Naive thymus-derived CD4-positive, alpha-beta T cell (primary cell): ENCODE measurements at regions of chr3 and their contacts with region 1.

Region 1: DNA sequence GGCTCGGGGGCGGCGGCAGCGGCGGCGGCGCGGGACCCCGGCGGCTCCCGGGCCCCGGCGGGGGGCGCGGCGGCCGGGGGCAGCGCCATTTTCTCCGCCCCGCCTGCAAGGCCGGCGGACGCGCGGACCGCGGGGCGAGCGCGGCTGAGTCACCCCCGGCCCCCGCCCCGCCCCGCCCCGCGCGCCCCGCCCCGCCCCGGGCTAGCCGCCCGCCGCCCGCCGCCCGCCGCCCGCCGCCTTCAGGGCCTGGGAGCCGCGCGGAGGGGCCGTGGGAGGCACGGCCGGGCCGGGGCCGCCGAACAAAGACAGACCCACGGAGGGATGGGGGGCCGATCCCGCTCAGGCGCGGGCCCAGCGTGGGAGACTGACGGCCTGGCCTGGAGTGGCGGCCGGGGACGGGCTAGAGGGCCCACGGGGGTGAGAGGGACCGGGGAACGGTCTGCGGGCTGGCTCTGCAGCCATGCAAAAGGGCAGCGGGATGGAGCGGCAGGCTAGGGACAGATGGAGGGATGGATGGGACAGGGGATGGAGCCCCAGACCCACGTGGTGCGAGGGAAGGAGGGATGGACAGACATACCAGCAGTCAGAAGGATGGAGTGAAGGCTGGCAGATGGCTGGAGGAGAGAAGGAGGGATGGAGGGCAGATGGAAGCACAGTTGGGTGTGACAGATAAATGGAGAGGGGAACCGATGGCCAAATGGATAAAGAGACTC is at the start of gene EIF4E3:
- DNase-seq: peak in 5 of 9 donors; percentile 14 to 72 (median 33)
- ATAC-seq: peak; percentile 61
- H3K4me3 ChIP-seq: peak within 1 kb of the TSS; percentile 81
- H3K4me3 Mint-ChIP-seq: peak within 1 kb of the TSS; percentile 85 to 99 (median 95)
- H3K27ac ChIP-seq: peak within 1 kb of the TSS; percentile 76
- H3K27ac Mint-ChIP-seq: peak within 1 kb of the TSS; percentile 84 to 98 (median 96)
- H3K4me1 ChIP-seq: peaks cover 51 to 60% of the 10 kb centered on the region in 2 donors
- H3K4me1 Mint-ChIP-seq: peaks cover 60 to 81% (median 76%) of the 10 kb centered on the region in 7 donors
- H3K27me3 ChIP-seq: no peaks in the 10 kb centered on the region
- H3K27me3 Mint-ChIP-seq: no peaks in the 10 kb centered on the region
- total RNA-seq, gene EIF4E3: 28.5 to 72.8 (median 39.2) TPM

Region 2: DNA sequence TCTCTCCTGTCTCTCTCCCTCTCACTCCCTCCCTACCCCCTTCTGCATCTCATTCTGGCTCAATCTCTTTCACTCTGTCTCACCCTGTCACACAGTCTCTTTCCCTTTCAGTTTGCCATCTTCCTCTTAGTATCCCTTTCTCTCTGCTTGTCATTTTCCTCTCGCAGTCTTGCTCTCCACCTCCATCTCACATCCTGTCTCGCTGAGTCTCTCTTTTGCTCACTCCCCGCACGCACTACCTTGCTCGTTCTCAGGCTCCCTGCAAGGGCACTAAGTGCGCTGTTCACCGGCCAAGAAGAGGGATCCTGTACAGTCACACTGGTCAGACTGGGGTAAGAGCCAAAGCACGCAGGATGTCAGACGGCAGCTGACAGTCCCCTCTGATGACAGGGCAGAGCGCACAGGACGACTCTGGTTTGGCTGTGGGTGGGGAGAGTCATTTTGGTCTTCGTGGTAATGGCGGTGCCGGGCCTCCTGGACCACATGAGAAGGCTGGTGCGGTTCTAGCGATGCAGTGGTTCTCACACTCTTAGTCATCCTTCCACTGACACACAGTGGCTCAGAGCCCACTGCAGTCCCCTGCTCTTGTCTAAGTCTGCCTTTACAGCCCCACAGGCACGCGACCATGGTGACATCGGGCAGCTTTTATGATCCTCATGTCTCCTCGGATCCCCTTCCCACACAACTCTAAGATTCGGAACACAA is 498.7 kb before region 1 on chr3:
- CTCF ChIA-PET with region 1: no interaction called
- POLR2A ChIA-PET with region 1: no interaction called
- intact Hi-C with region 1: loop called in 1 of 2 experiments (anchors 5 kb)
- DNase-seq: peak; percentile 34 to 89 (median 65)
- ATAC-seq: peak; percentile 86
- H3K4me3 ChIP-seq: peak overlapping the region; percentile 48
- H3K4me3 Mint-ChIP-seq: peak overlapping the region; percentile 51 to 85 (median 79)
- H3K27ac ChIP-seq: peak overlapping the region; percentile 59
- H3K27ac Mint-ChIP-seq: peak overlapping the region; percentile 85 to 97 (median 90)
- H3K4me1 ChIP-seq: peaks cover 21 to 64% of the 10 kb centered on the region in 2 donors
- H3K4me1 Mint-ChIP-seq: peaks cover 30 to 91% (median 88%) of the 10 kb centered on the region in 7 donors
- H3K27me3 ChIP-seq: no peaks in the 10 kb centered on the region
- H3K27me3 Mint-ChIP-seq: peaks cover 0 to 52% (median 0%) of the 10 kb centered on the region in 5 donors

Region 3: DNA sequence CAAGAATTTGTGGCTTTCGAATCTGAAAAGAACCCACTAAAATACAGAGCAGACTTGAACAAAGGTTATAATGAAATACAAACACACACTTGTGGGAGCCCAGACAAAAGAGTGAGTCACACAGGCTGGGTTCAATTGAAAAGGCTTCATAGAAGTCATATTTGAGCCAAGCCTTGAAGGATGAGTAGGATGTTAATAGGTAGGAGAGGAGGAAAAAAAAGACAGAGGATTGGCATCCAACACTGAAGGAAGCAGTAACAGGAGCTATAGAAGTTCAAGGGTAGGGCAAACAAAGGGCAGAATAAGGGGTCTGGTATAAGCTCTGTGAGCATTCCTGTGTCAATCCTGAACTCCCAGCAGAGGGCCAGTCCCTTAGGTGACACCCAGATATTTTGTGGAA is 467.3 kb before region 1 on chr3:
- CTCF ChIA-PET with region 1: no interaction called
- POLR2A ChIA-PET with region 1: no interaction called
- intact Hi-C with region 1: no loop called
- DNase-seq: no peak
- ATAC-seq: no peak
- H3K4me3 ChIP-seq: no peak overlapping the region
- H3K4me3 Mint-ChIP-seq: peak overlapping the region in 2 of 10 donors; percentile 39 to 46
- H3K27ac ChIP-seq: peak overlapping the region; percentile 23
- H3K27ac Mint-ChIP-seq: peak overlapping the region in 8 of 9 donors; percentile 40 to 90 (median 78)
- H3K4me1 ChIP-seq: peaks cover 0 to 37% of the 10 kb centered on the region in 2 donors
- H3K4me1 Mint-ChIP-seq: peaks cover 10 to 91% (median 76%) of the 10 kb centered on the region in 7 donors
- H3K27me3 ChIP-seq: no peaks in the 10 kb centered on the region
- H3K27me3 Mint-ChIP-seq: no peaks in the 10 kb centered on the region

Region 4: DNA sequence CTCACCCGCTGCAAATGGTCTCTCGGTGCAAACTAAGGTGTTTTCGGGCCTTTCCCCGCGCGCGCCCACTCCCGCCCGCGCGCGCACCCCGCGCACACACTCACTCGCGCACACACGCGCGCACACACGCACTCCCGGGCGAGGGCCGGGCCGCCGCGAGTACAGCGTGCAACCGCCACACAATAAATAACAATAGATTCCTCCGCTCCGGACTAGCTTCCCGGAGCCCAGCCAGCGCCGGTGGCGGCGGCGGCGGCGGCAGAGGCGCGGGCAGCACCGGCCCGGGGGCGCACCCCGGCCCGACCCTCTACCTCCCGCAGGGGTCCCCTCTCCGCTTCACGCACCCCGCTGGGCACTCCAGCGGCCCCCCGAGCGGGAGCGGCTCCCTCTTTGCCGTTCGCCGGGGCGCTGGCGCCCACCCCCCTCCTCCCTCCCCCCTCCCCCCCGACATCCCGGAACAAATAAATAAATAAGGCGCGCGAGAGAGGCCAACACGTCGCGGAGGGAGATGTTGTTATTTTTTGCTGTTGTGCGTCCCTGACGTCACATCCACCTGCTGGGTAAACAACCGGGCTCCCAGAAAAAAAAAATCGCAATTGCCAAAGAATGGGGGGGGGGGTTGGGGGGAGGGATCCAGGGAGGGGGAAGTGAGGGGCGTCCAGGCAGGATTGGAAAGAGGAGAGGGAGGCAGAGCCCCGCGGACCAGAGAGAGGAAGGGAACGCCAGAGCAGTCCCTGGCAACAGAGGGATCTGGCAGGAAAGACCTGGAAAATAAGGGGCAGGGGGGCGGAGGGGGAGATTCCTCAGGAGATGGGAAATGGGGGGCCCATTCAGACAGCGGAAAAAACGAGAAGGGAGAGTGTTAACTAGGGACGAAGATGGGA is 141.6 kb before region 1 on chr3 and contains the start of gene FOXP1:
- CTCF ChIA-PET with region 1: interaction called, 8 read pairs
- POLR2A ChIA-PET with region 1: no interaction called
- intact Hi-C with region 1: loop called (anchors 2 to 5 kb)
- DNase-seq: peak; percentile 62 to 80 (median 72)
- ATAC-seq: peak; percentile 77
- H3K4me3 ChIP-seq: peak within 1 kb of the TSS; percentile 76
- H3K4me3 Mint-ChIP-seq: peak within 1 kb of the TSS; percentile 94 to 99 (median 98)
- H3K27ac ChIP-seq: peak within 1 kb of the TSS; percentile 85
- H3K27ac Mint-ChIP-seq: peak within 1 kb of the TSS; percentile 94 to 99 (median 98)
- H3K4me1 ChIP-seq: peaks cover 7 to 16% of the 10 kb centered on the region in 2 donors
- H3K4me1 Mint-ChIP-seq: peaks cover 12 to 44% (median 33%) of the 10 kb centered on the region in 7 donors
- H3K27me3 ChIP-seq: no peaks in the 10 kb centered on the region
- H3K27me3 Mint-ChIP-seq: peaks cover 0 to 38% (median 0%) of the 10 kb centered on the region in 5 donors
- total RNA-seq, gene FOXP1: 104 to 537 (median 456) TPM

Region 5: DNA sequence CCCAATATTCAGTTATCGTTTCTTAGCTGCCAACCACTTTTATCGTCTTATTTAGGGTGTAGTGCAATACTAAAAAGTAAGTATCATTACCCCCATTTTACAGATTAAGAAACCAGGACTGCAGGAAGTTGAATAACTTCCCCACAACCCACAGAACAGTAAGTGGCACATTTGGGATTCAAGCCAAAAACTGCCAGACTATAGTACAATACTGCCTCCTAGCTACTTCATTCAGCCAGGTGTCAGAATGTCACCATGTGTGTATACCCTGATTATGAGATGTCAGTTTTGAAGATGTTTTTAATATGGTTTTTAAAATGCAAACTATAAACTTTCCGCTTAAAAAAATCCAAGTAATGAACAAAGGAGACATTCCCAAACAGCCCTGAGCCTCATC is 133.7 kb after region 1 on chr3:
- CTCF ChIA-PET with region 1: interaction called, 4 read pairs
- POLR2A ChIA-PET with region 1: no interaction called
- intact Hi-C with region 1: loop called (anchors 1 kb)
- DNase-seq: peak in 5 of 9 donors; percentile 25 to 61 (median 47)
- ATAC-seq: peak; percentile 91
- H3K4me3 ChIP-seq: no peak overlapping the region
- H3K4me3 Mint-ChIP-seq: no peak overlapping the region
- H3K27ac ChIP-seq: no peak overlapping the region
- H3K27ac Mint-ChIP-seq: no peak overlapping the region
- H3K4me1 ChIP-seq: peaks cover 0 to 3% of the 10 kb centered on the region in 2 donors
- H3K4me1 Mint-ChIP-seq: peaks cover 0 to 8% (median 5%) of the 10 kb centered on the region in 7 donors
- H3K27me3 ChIP-seq: no peaks in the 10 kb centered on the region
- H3K27me3 Mint-ChIP-seq: peaks cover 22 to 32% (median 29%) of the 10 kb centered on the region in 5 donors

Region 6: GRCh38 chr3:72347819-72348319 is 622.4 kb after region 1 on chr3:
- CTCF ChIA-PET with region 1: no interaction called
- POLR2A ChIA-PET with region 1: no interaction called
- intact Hi-C with region 1: loop called (anchors 10 kb)
- DNase-seq: peak in 5 of 9 donors; percentile 37 to 44 (median 41)
- ATAC-seq: peak; percentile 44
- H3K4me3 ChIP-seq: no peak overlapping the region
- H3K4me3 Mint-ChIP-seq: peak overlapping the region in 7 of 10 donors; percentile 11 to 71 (median 60)
- H3K27ac ChIP-seq: peak overlapping the region; percentile 22
- H3K27ac Mint-ChIP-seq: peak overlapping the region in 8 of 9 donors; percentile 70 to 90 (median 86)
- H3K4me1 ChIP-seq: peaks cover 3 to 63% of the 10 kb centered on the region in 2 donors
- H3K4me1 Mint-ChIP-seq: peaks cover 37 to 69% (median 64%) of the 10 kb centered on the region in 7 donors
- H3K27me3 ChIP-seq: no peaks in the 10 kb centered on the region
- H3K27me3 Mint-ChIP-seq: peaks cover 0 to 12% (median 0%) of the 10 kb centered on the region in 5 donors

Region 7: DNA sequence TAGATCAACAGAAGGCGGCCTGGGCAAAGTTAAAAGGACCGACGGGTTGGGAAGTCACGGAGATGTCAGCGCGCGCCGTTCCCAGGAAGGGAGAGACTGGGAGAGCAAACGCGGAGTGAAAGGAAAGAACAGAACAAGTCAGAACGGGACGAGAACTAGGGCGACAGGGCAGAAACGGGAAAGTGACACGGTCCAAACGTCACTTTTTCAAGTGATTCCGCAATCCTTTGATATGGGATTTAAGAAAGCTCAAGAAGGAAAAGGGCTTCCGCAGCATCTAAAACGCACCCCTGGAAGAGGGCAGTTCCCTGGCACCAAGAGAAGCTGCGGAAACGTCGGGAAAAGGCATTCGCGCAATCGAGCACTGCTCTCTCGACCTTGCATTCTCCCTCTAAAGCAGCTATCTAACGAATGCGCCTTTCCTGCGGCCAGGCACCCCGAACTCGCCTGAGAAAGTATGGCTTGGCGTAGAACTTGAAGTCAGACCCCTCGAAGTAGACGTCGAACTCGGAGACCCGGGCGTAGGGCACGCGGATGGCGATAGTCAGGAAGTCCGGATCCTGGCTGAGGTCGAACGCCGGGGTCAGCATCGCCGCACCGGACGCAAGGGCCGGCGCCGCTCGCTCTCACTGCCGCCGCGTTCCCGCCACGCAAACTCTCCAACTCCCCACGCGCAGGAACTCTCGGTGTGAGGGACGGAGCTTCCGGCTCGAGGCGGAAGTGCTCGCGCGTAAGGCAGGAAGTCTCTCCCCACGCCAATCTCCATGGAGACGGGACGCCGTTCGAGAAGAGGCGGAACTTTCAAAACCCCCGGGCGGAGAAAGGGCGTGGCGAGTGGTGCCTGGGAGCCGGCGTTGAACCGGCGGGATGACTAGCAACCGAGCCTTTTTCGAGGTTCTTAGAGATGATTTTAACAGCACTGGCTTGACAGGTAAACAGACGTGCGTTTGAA is 1122.6 kb after region 1 on chr3 and contains the start of gene SHQ1:
- CTCF ChIA-PET with region 1: no interaction called
- POLR2A ChIA-PET with region 1: interaction called, 3 read pairs
- intact Hi-C with region 1: loop called (anchors 2 kb)
- DNase-seq: peak; percentile 87 to 94 (median 92)
- ATAC-seq: peak; percentile 96
- H3K4me3 ChIP-seq: peak within 1 kb of the TSS; percentile 92
- H3K4me3 Mint-ChIP-seq: peak within 1 kb of the TSS; percentile 93 to 100 (median 98)
- H3K27ac ChIP-seq: peak within 1 kb of the TSS; percentile 71
- H3K27ac Mint-ChIP-seq: peak within 1 kb of the TSS; percentile 80 to 92 (median 89)
- H3K4me1 ChIP-seq: peaks cover 14 to 16% of the 10 kb centered on the region in 2 donors
- H3K4me1 Mint-ChIP-seq: peaks cover 34 to 67% (median 51%) of the 10 kb centered on the region in 7 donors
- H3K27me3 ChIP-seq: no peaks in the 10 kb centered on the region
- H3K27me3 Mint-ChIP-seq: peaks cover 0 to 7% (median 0%) of the 10 kb centered on the region in 5 donors
- total RNA-seq, gene SHQ1: 14.1 to 34.3 (median 24.5) TPM